Activated CD8-positive, alpha-beta T cell treated with anti-CD3 and anti-CD28 coated beads, Interleukin-2, amount 10 ng/mL, durations not matched to agents 7 days and 5 days (primary cell): ENCODE measurements at regions of chr20 and their contacts with region 1.

Region 1: DNA sequence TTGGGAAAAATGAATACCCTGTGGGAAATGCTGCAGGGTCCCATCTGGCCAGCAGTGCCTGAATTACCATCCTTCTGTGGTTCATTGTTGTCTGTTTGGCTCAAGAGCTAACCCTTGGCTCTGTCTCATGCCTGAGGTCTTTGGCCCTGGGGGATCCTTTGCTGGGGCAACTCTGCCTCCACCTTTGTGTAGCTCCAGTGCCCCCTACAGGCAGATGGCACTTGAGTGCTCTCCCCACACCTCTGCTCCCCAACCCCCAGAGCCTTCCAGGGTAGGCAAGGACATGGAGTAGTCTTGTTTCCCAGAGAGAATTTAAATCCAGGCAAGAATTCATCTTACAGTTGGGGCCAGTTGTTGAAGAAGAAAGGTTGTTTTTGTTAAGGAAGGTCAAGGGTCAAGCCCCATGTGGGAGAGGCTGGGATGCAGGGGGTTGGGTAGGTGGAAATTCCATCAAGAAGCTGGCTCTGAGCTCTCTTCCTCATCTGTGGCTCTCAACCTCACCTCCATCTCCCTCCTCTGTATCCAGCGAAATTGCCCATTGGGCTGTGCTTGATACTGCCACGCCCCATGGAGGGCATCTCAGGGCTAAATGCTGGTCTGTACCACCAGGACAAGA is 44.2 kb downstream of the ZNF831 start:
- DNase-seq: peak; percentile 86
- ATAC-seq: peak; percentile 96
- H3K4me3 Mint-ChIP-seq: no peak overlapping the region
- H3K27ac Mint-ChIP-seq: peak overlapping the region; percentile 61
- H3K4me1 Mint-ChIP-seq: peaks cover 17% of the 10 kb centered on the region
- H3K27me3 Mint-ChIP-seq: no peaks in the 10 kb centered on the region

Region 2: GRCh38 chr20:59063358-59064213 is 144.3 kb before region 1 on chr20:
- CTCF ChIA-PET with region 1: interaction called, 10 read pairs
- POLR2A ChIA-PET with region 1: no interaction called
- DNase-seq: no peak
- ATAC-seq: no peak
- H3K4me3 Mint-ChIP-seq: no peak overlapping the region
- H3K27ac Mint-ChIP-seq: no peak overlapping the region
- H3K4me1 Mint-ChIP-seq: no peaks in the 10 kb centered on the region
- H3K27me3 Mint-ChIP-seq: peaks cover 19% of the 10 kb centered on the region

Region 3: GRCh38 chr20:59087829-59088433 is 119.9 kb before region 1 on chr20:
- CTCF ChIA-PET with region 1: interaction called, 177 read pairs
- POLR2A ChIA-PET with region 1: interaction called, 5 read pairs
- DNase-seq: peak; percentile 89
- ATAC-seq: peak; percentile 76
- H3K4me3 Mint-ChIP-seq: no peak overlapping the region
- H3K27ac Mint-ChIP-seq: no peak overlapping the region
- H3K4me1 Mint-ChIP-seq: peaks cover 1% of the 10 kb centered on the region
- H3K27me3 Mint-ChIP-seq: peaks cover 11% of the 10 kb centered on the region

Region 4: DNA sequence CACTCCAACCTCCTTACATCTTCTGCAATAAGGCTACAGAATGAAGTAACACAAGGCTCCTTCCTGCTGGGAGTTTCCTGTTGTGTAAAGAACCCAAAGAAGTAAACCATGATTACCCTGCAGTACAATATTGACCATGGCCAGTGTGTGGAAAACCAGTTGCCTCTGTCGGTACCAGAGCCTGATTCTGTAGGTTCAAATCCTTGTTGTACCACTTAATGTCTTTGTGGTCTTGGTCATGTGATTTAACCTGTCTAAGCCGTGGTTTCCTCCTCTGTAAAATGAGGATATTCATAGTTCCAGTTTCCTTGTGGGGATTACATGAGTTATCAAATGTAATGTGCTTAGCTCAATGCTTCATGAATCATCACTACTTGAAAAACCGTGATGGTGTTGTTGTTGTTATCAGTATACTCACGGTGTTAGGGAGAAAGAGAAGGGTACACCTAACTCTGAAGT is 105.0 kb before region 1 on chr20:
- CTCF ChIA-PET with region 1: interaction called, 12 read pairs
- POLR2A ChIA-PET with region 1: no interaction called
- DNase-seq: no peak
- ATAC-seq: peak; percentile 27
- H3K4me3 Mint-ChIP-seq: no peak overlapping the region
- H3K27ac Mint-ChIP-seq: no peak overlapping the region
- H3K4me1 Mint-ChIP-seq: peaks cover 13% of the 10 kb centered on the region
- H3K27me3 Mint-ChIP-seq: peaks cover 6% of the 10 kb centered on the region

Region 5: DNA sequence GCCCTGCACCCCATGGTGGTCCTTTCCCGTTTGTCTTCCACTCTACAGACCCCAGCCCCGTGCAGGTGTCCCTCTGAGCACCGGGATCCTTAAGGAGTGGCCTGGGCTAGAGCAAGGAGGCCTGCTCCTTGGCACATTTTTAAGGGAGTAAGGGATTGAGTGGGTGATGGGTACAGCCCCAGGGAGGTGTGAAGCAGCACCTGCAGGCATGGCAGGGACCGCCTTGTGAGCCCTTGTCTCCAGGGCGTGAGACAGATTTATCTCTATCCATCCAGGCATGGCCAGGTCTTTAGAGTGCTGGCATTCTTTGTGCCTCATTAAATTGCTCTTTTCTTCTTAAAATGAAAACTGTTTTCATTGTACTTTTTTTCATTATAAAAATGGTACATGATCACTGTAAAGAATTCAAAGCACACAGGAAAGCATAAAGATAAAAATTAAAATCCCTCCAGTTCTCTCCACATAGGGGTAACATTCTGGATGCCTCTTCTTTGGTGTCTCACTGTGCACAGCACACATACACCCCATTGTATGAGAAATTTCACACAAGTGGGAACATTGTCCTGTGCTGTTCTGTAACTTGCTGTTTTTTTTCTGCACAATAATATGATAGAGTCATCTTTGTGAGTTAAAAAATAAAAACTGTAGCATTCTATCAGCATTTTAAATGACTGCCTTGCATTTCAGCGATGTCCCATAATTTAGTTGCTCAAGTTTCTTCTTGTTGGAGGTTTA is 76.1 kb before region 1 on chr20:
- CTCF ChIA-PET with region 1: no interaction called
- POLR2A ChIA-PET with region 1: no interaction called
- DNase-seq: no peak
- ATAC-seq: no peak
- H3K4me3 Mint-ChIP-seq: no peak overlapping the region
- H3K27ac Mint-ChIP-seq: no peak overlapping the region
- H3K4me1 Mint-ChIP-seq: peaks cover 11% of the 10 kb centered on the region
- H3K27me3 Mint-ChIP-seq: peaks cover 3% of the 10 kb centered on the region

Region 6: DNA sequence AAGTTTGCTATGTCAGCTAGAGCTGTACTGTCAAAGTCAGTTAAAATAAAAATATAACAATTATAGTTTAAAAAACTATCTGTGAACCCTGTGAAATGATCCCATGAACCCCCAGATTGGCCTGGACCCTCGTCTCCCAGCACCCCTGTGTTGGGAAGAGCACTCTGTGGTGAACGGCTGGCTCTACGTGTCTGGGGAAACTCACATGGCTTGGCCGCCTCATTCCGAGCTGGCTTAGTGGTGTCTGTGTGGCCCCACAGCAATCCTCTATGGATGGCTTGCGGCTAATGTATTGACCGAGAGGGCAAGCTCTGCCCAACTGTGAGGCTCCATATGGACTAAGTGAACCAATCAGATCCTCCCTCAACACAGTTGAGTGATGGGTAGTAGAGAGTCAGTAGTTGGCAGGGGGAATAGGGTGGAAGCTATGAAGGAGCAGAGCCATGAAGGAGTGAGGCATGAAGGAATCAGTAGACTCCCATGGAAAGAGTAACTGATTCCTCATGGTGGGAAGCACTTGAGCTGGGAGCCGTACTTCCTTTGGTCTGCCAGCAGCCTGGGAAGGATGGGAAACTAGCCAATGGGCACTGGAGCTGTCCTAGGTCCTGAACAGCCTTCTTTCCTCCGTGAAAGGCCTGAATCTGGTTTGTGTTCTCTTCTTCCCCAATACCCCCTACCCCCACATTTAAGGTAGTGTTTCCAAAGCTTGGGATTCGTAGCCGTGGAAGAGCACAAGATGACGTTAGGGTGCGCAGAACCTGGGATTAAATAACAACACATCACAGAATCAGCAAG is 65.9 kb before region 1 on chr20:
- CTCF ChIA-PET with region 1: interaction called, 13 read pairs
- POLR2A ChIA-PET with region 1: no interaction called
- DNase-seq: peak; percentile 40
- ATAC-seq: no peak
- H3K4me3 Mint-ChIP-seq: no peak overlapping the region
- H3K27ac Mint-ChIP-seq: no peak overlapping the region
- H3K4me1 Mint-ChIP-seq: peaks cover 50% of the 10 kb centered on the region
- H3K27me3 Mint-ChIP-seq: no peaks in the 10 kb centered on the region

Region 7: GRCh38 chr20:59170406-59171349 is 37.2 kb before region 1 on chr20:
- CTCF ChIA-PET with region 1: interaction called, 27 read pairs
- POLR2A ChIA-PET with region 1: interaction called, 3 read pairs
- DNase-seq: no peak
- ATAC-seq: no peak
- H3K4me3 Mint-ChIP-seq: no peak overlapping the region
- H3K27ac Mint-ChIP-seq: no peak overlapping the region
- H3K4me1 Mint-ChIP-seq: peaks cover 79% of the 10 kb centered on the region
- H3K27me3 Mint-ChIP-seq: no peaks in the 10 kb centered on the region

Region 8: DNA sequence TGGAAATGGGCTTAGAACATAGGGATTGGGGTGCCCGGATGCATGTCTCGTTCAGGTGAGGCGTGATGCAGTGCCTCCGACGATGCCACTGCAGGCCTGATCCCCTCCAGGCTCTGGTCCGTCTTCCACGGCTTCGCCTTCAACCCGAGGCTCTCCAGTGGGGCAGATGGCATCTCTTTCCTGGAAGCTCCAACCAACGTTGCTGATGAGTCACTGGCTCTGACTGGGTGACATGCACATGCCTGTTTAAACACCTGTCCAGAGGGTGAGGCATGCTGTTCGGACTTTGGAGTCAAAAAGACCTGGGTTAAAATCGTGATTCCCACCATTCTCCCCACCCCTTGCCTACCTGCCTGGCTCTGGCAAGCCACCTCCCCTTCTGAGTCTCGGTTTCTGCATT is 83.9 kb after region 1 on chr20:
- CTCF ChIA-PET with region 1: no interaction called
- POLR2A ChIA-PET with region 1: no interaction called
- DNase-seq: no peak
- ATAC-seq: no peak
- H3K4me3 Mint-ChIP-seq: no peak overlapping the region
- H3K27ac Mint-ChIP-seq: no peak overlapping the region
- H3K4me1 Mint-ChIP-seq: peaks cover 11% of the 10 kb centered on the region
- H3K27me3 Mint-ChIP-seq: peaks cover 26% of the 10 kb centered on the region

Region 9: GRCh38 chr20:59403261-59403961 is 195.6 kb after region 1 on chr20:
- CTCF ChIA-PET with region 1: interaction called, 37 read pairs
- POLR2A ChIA-PET with region 1: no interaction called
- DNase-seq: peak; percentile 78
- ATAC-seq: peak; percentile 84
- H3K4me3 Mint-ChIP-seq: peak overlapping the region; percentile 58
- H3K27ac Mint-ChIP-seq: no peak overlapping the region
- H3K4me1 Mint-ChIP-seq: peaks cover 5% of the 10 kb centered on the region
- H3K27me3 Mint-ChIP-seq: peaks cover 14% of the 10 kb centered on the region